ENCODE measurements at regions of chr1 and their contacts with region 1.

Region 1: GRCh38 chr1:198465201-198466144 is 75.0 kb downstream of the ATP6V1G3 start:
- DNase-seq: peak in 1 of 2 experiments; percentile 65
- H3K4me3 ChIP-seq: no peak overlapping the region
- H3K27ac ChIP-seq: peak overlapping the region; percentile 8; the same call in 1 of the 2 replicates
- H3K4me1 ChIP-seq: 0 out of 2 replicates have a peak, but pooled peaks cover 3% of the 10 kb centered on the region
- H3K27me3 ChIP-seq: no peaks in the 10 kb centered on the region
- CTCF ChIP-seq: peak; percentile 86

Region 2: DNA sequence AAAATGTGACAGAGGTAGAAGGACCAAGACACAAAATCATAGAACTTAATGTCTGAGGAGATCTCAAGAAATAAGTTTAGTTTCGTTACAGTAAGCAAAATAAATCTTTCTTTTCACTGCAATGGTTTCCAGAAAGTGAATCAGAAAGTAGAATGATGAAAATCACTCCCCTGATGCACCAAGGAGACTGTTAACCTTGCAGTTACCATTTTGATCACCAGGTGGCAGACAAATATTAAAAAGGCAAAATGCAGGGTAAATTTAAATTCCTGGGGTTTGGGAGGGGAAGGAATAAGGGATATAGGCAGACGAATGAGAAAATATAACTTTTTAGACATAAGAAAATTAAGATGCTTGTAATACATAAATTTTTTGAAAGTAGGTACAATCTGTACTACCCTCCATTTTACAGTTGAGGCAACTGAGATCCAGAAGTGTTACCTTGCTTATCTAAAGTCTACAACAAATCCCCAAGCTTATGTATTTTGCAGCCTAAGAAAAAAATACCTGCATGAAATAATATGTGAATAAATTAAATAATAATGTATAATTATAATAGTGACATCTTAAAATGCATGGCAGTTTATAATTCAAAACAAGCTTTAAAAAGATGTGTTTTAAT is 944.2 kb before region 1 on chr1:
- CTCF ChIA-PET with region 1: no interaction called
- POLR2A ChIA-PET with region 1: no interaction called
- intact Hi-C with region 1: loop called (anchors 5 kb)
- DNase-seq: peak in 1 of 2 experiments; percentile 1
- H3K4me3 ChIP-seq: no peak overlapping the region
- H3K27ac ChIP-seq: no peak overlapping the region
- H3K4me1 ChIP-seq: no peaks in the 10 kb centered on the region
- H3K27me3 ChIP-seq: no peaks in the 10 kb centered on the region
- CTCF ChIP-seq: peak; percentile 77

Region 3: DNA sequence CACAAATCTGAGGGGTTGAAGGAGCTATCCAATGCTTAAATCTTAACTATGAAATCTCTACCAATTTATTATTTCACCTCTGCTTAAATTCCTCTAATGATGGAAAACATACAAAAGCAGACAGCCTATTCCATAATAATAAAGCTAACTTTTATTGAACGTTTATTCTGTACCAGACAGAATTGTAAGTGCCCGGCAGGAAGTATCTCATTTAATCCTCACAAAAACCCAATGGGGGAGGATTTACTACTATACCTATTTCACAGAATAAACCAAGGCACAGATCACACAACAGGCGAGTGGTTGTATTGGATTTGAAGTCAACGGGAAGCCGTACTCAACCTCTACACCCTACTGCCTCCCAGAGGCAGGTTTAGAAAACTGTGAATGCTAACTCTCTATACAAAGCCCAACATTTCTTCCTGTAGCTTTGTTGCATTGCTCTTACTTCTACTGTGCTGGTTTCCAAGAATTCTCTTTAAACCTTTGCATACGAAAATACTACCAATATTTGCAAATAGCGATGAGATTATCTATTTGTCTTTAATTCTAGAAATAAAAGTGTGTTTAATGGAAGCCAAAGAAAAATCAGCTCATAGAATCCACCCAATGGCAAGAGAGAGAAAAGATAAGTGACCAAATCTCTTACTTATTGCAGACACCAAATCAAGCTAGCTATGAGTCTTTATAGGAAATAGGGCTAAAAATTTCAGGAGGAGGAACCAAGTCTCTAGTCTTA is 596.6 kb before region 1 on chr1:
- CTCF ChIA-PET with region 1: no interaction called
- POLR2A ChIA-PET with region 1: no interaction called
- intact Hi-C with region 1: loop called (anchors 1 kb)
- DNase-seq: peak; percentile 1 to 38
- H3K4me3 ChIP-seq: no peak overlapping the region
- H3K27ac ChIP-seq: no peak overlapping the region
- H3K4me1 ChIP-seq: no peaks in the 10 kb centered on the region
- H3K27me3 ChIP-seq: no peaks in the 10 kb centered on the region
- CTCF ChIP-seq: peak; percentile 72

Region 4: DNA sequence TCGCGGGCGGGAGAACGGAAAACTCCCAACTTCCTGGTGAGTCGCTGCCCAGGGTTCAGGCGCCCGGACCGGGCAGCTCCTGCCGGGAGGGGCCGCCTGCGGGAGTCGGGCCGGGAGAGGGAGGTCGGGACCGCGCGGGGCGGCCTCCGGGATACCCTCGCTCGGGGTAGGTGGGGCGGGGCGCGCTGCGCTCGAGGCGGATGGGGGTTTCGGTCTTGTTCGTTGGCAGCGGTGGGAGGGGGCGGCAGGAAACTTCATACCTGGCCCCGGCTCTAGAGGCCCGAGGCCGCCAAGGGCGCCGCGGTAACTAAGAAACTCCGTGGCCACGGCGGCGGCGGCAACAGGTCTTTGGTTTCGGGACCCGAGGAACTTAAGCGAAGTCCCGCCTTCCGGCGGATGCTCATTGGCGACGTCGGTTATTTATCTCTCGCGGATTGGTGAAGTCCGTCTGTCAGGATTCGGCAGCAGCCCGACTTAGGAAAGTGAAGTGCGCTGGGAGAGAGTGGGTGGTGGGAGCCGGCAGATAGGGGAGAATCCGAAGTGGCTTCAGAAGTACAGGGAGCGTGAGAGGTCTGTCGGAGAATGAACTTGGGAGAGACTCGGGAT is 308.1 kb before region 1 on chr1:
- CTCF ChIA-PET with region 1: no interaction called
- POLR2A ChIA-PET with region 1: no interaction called
- intact Hi-C with region 1: loop called (anchors 1 kb)
- DNase-seq: peak; percentile 79 to 87
- H3K4me3 ChIP-seq: peak overlapping the region; percentile 91
- H3K27ac ChIP-seq: peak overlapping the region; percentile 81
- H3K4me1 ChIP-seq: peaks cover 34% of the 10 kb centered on the region
- H3K27me3 ChIP-seq: no peaks in the 10 kb centered on the region
- CTCF ChIP-seq: no peak

Region 5: DNA sequence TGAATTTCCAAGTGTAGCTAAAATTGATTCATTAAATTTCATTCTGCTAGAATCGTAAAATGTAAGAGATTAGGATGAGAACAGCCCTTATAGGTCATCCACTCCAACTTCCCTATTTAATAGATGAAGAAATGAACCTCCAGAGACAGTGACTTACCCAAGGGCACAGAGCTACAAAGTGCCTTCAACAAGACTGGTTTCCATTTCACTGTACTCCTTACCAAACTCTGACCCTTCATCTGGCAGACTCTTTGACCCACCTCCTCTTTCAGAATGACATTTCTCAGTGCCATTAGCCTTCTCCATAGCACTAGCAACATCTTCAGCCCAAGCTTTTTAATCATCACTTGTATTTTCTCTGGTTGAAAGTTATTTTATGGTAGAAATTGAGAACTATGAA is 147.4 kb before region 1 on chr1:
- CTCF ChIA-PET with region 1: no interaction called
- POLR2A ChIA-PET with region 1: no interaction called
- intact Hi-C with region 1: no loop called
- DNase-seq: no peak
- H3K4me3 ChIP-seq: no peak overlapping the region
- H3K27ac ChIP-seq: no peak overlapping the region
- H3K4me1 ChIP-seq: no peaks in the 10 kb centered on the region
- H3K27me3 ChIP-seq: no peaks in the 10 kb centered on the region
- CTCF ChIP-seq: no peak

Region 6: GRCh38 chr1:198529414-198529813 is 63.9 kb after region 1 on chr1:
- CTCF ChIA-PET with region 1: no interaction called
- POLR2A ChIA-PET with region 1: no interaction called
- intact Hi-C with region 1: no loop called
- DNase-seq: no peak
- H3K4me3 ChIP-seq: no peak overlapping the region
- H3K27ac ChIP-seq: no peak overlapping the region
- H3K4me1 ChIP-seq: no peaks in the 10 kb centered on the region; the same call in 1 of the 2 replicates
- H3K27me3 ChIP-seq: no peaks in the 10 kb centered on the region
- CTCF ChIP-seq: no peak

Region 7: GRCh38 chr1:198564716-198565115 is 99.2 kb after region 1 on chr1:
- CTCF ChIA-PET with region 1: no interaction called
- POLR2A ChIA-PET with region 1: no interaction called
- intact Hi-C with region 1: no loop called
- DNase-seq: no peak
- H3K4me3 ChIP-seq: no peak overlapping the region
- H3K27ac ChIP-seq: no peak overlapping the region
- H3K4me1 ChIP-seq: peaks cover 12% of the 10 kb centered on the region; the same call in 1 of the 2 replicates
- H3K27me3 ChIP-seq: no peaks in the 10 kb centered on the region
- CTCF ChIP-seq: no peak

Region 8: GRCh38 chr1:198597690-198598430 is 132.4 kb after region 1 on chr1:
- CTCF ChIA-PET with region 1: no interaction called
- POLR2A ChIA-PET with region 1: no interaction called
- intact Hi-C with region 1: no loop called
- DNase-seq: no peak
- H3K4me3 ChIP-seq: no peak overlapping the region
- H3K27ac ChIP-seq: no peak overlapping the region
- H3K4me1 ChIP-seq: no peaks in the 10 kb centered on the region
- H3K27me3 ChIP-seq: no peaks in the 10 kb centered on the region
- CTCF ChIP-seq: no peak

Region 9: GRCh38 chr1:198657550-198658064 is 192.1 kb after region 1 on chr1:
- CTCF ChIA-PET with region 1: interaction called, 5 read pairs
- POLR2A ChIA-PET with region 1: no interaction called
- intact Hi-C with region 1: loop called (anchors 1 kb)
- DNase-seq: peak; percentile 45 to 93
- H3K4me3 ChIP-seq: no peak overlapping the region
- H3K27ac ChIP-seq: peak overlapping the region; percentile 70
- H3K4me1 ChIP-seq: peaks cover 28% of the 10 kb centered on the region
- H3K27me3 ChIP-seq: no peaks in the 10 kb centered on the region
- CTCF ChIP-seq: no peak

Measured in PC-9 (cell line).